ENCODE measurements at regions of chr7 and their contacts with region 1.

Region 1: DNA sequence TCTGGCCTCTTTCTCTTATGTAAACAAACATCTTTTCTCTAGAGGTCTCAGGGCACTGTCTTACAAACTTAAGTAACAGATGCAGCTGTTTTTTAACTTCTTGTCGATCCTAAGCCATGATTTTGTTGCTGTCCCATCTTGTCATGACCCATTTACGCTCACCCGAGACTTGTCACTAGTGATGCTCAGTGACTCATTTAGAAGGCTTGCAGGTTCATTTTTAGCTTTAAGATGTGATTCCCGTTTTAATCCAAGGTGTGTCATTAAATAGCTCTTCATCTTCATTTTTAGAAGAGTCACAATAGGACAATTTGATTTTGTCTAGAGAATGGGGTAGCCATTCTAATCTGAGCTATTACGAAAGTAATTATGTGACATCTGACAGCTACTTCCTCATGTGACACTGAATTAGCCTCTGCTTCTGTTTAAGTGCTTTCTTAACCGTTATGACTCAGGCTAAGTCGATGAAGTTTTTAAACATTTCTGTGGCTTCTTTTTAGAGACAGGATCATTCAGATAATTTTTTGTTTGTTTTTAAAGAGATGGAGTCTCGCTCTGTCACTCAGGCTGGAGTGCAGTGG is 42.7 kb downstream of the SPDYE5 start:
- DNase-seq: no peak
- ATAC-seq: no peak
- H3K4me3 ChIP-seq: no peak overlapping the region
- H3K27ac ChIP-seq: peak overlapping the region in 1 of 12 donors; percentile 67
- H3K4me1 ChIP-seq: peaks cover 0 to 8% (median 0%) of the 10 kb centered on the region in 12 donors
- H3K27me3 ChIP-seq: no peaks in the 10 kb centered on the region
- CTCF ChIP-seq: no peak
- POLR2A ChIP-seq: no peak

Region 2: GRCh38 chr7:75565132-75565837 is 30.5 kb after region 1 on chr7:
- intact Hi-C with region 1: no loop called
- DNase-seq: peak in 4 of 5 donors; percentile 32 to 71 (median 42)
- ATAC-seq: peak; percentile 57 to 86 (median 68)
- H3K4me3 ChIP-seq: no peak overlapping the region
- H3K27ac ChIP-seq: peak overlapping the region; percentile 62 to 88 (median 76)
- H3K4me1 ChIP-seq: peaks cover 0 to 27% (median 11%) of the 10 kb centered on the region in 12 donors
- H3K27me3 ChIP-seq: no peaks in the 10 kb centered on the region
- CTCF ChIP-seq: no peak
- POLR2A ChIP-seq: no peak

Region 3: GRCh38 chr7:75591467-75592255 is 56.8 kb after region 1 on chr7:
- intact Hi-C with region 1: loop called in 1 of 10 experiments (anchors 5 kb)
- DNase-seq: no peak
- ATAC-seq: no peak
- H3K4me3 ChIP-seq: no peak overlapping the region
- H3K27ac ChIP-seq: no peak overlapping the region
- H3K4me1 ChIP-seq: peaks cover 0 to under 1% (median 0%) of the 10 kb centered on the region in 12 donors
- H3K27me3 ChIP-seq: no peaks in the 10 kb centered on the region
- CTCF ChIP-seq: no peak
- POLR2A ChIP-seq: no peak

Region 4: GRCh38 chr7:75611548-75612178 is 76.8 kb after region 1 on chr7:
- intact Hi-C with region 1: loop called in 1 of 10 experiments (anchors 10 kb)
- DNase-seq: peak; percentile 85 to 95 (median 88)
- ATAC-seq: peak; percentile 99
- H3K4me3 ChIP-seq: peak overlapping the region in 10 of 12 donors; percentile 22 to 50 (median 38)
- H3K27ac ChIP-seq: peak overlapping the region; percentile 52 to 93 (median 80)
- H3K4me1 ChIP-seq: peaks cover 0 to 18% (median 7%) of the 10 kb centered on the region in 12 donors
- H3K27me3 ChIP-seq: no peaks in the 10 kb centered on the region
- CTCF ChIP-seq: peak in 4 of 12 donors; percentile 14 to 29 (median 20)
- POLR2A ChIP-seq: peak in 1 of 2 donors; percentile 38

Region 5: DNA sequence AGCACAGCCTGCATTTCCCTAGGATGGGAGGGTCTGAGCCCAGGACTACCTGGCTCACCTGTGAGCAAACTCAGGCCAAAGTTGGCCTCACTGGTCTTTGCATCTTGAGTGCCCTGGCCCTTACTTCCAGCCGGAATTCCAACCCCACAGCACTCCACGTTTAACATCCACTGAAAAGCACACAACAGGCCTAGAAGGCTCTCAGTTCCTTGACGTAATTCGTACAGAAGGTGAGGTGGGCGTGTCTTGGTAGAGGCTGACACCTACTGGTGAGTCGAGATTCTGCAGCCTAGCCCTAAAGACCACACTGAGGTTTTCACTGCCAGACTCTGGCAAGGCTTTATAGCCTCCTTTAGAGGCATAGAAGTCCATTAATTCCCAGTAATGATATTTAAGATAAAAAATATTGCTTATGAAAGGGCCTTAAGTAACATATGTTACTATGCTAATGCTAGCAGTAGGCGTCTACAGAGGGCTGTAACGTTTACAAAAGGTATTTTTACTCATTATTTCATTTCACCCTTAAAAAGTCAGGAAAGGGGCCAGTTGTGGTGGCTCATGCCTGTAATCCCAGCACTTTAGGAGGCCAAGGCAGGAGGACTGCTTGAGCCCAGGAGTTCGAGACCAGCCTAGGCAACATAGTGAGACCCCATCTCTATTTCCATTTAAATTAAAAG is 108.1 kb after region 1 on chr7:
- intact Hi-C with region 1: loop called in 1 of 10 experiments (anchors 5 kb)
- DNase-seq: peak in 1 of 5 donors; percentile 36
- ATAC-seq: peak in 2 of 4 donors; percentile 29 to 57
- H3K4me3 ChIP-seq: no peak overlapping the region
- H3K27ac ChIP-seq: no peak overlapping the region
- H3K4me1 ChIP-seq: peaks cover 0 to 20% (median 13%) of the 10 kb centered on the region in 12 donors
- H3K27me3 ChIP-seq: no peaks in the 10 kb centered on the region
- CTCF ChIP-seq: peak; percentile 38 to 80 (median 58)
- POLR2A ChIP-seq: no peak

Region 6: GRCh38 chr7:75762314-75762917 is 227.6 kb after region 1 on chr7:
- intact Hi-C with region 1: loop called in 3 of 10 experiments (anchors 5 to 10 kb)
- DNase-seq: no peak
- ATAC-seq: peak; percentile 55 to 91 (median 88)
- H3K4me3 ChIP-seq: no peak overlapping the region
- H3K27ac ChIP-seq: no peak overlapping the region
- H3K4me1 ChIP-seq: peaks cover 0 to 4% (median 0%) of the 10 kb centered on the region in 12 donors
- H3K27me3 ChIP-seq: no peaks in the 10 kb centered on the region
- CTCF ChIP-seq: peak; percentile 54 to 84 (median 77)
- POLR2A ChIP-seq: no peak

Measured in heart left ventricle (tissue), 16 donors.